Breast epithelium (tissue), 4 donors: ENCODE measurements at regions of chr7 and their contacts with region 1.

Region 1: DNA sequence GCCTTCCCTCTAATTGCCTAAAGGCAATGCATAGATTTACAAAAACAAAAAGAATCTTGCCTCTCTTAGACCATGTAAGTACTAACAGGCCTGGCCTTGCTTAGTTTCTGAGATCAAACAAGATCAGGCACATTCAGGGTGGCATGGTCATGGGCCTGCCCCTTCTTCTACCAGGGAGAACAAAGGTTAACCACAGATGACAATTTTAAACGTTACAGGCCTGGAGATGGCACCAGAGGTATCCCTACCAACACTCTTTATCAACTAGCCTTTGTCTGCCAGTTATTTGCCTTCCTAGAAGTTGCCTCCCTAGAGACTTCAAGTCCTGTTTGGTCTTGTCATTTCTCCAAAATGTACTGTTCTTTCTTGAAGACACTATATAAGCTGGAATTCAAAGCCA is 252.6 kb downstream of the DOCK4 start:
- DNase-seq: no peak
- H3K4me3 ChIP-seq: no peak overlapping the region
- H3K27ac ChIP-seq: peak overlapping the region in 1 of 2 donors; percentile 50
- H3K4me1 ChIP-seq: no peaks in the 10 kb centered on the region
- H3K27me3 ChIP-seq: no peaks in the 10 kb centered on the region
- CTCF ChIP-seq: no peak
- POLR2A ChIP-seq: no peak

Region 2: GRCh38 chr7:111499037-111499655 is 454.5 kb before region 1 on chr7:
- intact Hi-C with region 1: no loop called
- DNase-seq: no peak
- H3K4me3 ChIP-seq: no peak overlapping the region
- H3K27ac ChIP-seq: no peak overlapping the region
- H3K4me1 ChIP-seq: no peaks in the 10 kb centered on the region
- H3K27me3 ChIP-seq: no peaks in the 10 kb centered on the region
- CTCF ChIP-seq: no peak
- POLR2A ChIP-seq: no peak

Region 3: GRCh38 chr7:112646783-112647182 is 693.2 kb after region 1 on chr7:
- intact Hi-C with region 1: loop called (anchors 5 kb)
- DNase-seq: no peak
- H3K4me3 ChIP-seq: no peak overlapping the region
- H3K27ac ChIP-seq: no peak overlapping the region
- H3K4me1 ChIP-seq: no peaks in the 10 kb centered on the region
- H3K27me3 ChIP-seq: no peaks in the 10 kb centered on the region
- CTCF ChIP-seq: no peak
- POLR2A ChIP-seq: no peak